Activated T-helper 2 cell treated with anti-CD3 and anti-CD28 coated beads, Interferon-gamma antibody, Interleukin-2, Interleukin-4, amounts not matched to agents 10 μg/mL and 5 μg/mL and 100 μg/mL, durations not matched to agents 14 hours and 24 hours and 36 hours (primary cell): ENCODE measurements at regions of chr9 and their contacts with region 1.

Region 1: DNA sequence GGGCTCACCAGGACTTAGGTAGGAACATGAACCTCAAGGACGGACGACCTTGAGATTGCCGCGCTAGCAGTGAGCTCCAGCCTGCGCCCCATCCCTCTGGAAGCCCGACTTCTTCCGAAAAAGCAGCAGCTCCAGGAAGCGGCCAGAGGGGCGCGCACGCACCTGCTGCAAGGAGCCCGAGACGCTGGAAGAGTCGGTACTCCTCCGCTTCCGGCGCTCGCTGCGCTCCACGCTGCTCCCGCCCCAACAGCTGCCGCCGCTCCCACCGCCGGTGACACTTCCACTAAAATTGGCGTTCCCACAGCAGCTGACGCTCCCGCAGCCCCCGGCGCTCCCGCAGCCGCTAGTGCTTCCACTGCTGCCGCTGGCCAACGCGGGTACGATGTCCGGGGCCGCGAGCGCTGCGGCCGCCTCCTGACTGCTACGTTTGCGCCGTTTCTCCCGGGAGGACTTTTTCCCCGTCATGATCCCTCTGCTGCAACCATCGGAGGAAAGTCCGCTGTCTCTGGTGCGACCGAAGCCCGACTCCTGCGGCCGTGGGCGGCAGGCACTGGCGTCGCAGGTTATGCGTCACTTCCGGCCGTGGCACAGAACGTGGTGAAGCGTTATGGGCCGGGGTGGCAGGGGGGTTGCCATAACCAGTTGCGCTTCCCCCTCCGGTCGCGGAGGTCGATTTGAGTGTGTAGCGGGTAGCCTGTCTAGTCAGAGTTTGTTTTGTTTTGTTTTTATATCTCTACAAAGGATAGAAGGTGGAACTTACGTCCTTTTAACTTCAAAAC is at the start of gene CAAP1:
- DNase-seq: peak; percentile 88
- H3K4me3 Mint-ChIP-seq: peak within 1 kb of the TSS; percentile 96
- H3K27ac Mint-ChIP-seq: peak within 1 kb of the TSS; percentile 99
- H3K4me1 Mint-ChIP-seq: peaks cover 25% of the 10 kb centered on the region
- H3K27me3 Mint-ChIP-seq: no peaks in the 10 kb centered on the region
- total RNA-seq, gene CAAP1: 19.4 and 20.7 TPM in 2 replicates

Region 2: DNA sequence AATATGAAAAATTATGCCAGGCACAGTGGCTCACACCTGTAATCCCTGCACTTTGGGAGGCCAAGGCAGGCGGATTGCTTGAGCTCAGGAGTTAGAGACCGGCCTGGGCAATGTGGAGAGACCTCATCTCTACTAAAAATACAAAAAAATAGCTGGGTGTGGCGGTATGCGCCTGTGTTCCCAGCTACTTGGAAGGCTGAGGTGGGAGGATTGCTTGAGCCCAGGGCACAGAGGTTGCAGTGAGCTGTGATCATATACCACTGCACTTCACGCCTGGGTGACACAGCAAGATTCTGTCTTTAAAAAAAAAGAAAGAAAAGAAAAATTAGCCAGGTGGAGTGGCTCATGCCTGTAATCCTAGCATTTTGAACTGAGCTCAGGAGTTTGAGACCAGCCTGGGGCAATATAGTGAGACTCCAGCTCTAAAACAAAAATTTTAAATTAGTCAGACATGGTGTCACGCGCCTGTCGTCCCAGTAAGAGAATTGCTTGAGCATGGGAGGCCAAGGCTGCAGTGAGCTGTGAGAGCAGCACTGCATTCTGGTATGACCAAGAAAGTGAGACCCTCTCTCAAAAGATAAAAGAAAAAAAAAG is 36.6 kb after region 1 on chr9:
- intact Hi-C with region 1: no loop called
- DNase-seq: no peak
- H3K4me3 Mint-ChIP-seq: no peak overlapping the region
- H3K27ac Mint-ChIP-seq: no peak overlapping the region
- H3K4me1 Mint-ChIP-seq: peaks cover 5% of the 10 kb centered on the region
- H3K27me3 Mint-ChIP-seq: no peaks in the 10 kb centered on the region

Region 3: GRCh38 chr9:26946753-26947727 is 54.6 kb after region 1 on chr9 and contains the start of gene PLAA:
- intact Hi-C with region 1: loop called (anchors 1 kb)
- DNase-seq: peak; percentile 83
- H3K4me3 Mint-ChIP-seq: peak within 1 kb of the TSS; percentile 95
- H3K27ac Mint-ChIP-seq: peak within 1 kb of the TSS; percentile 100
- H3K4me1 Mint-ChIP-seq: peaks cover 47% of the 10 kb centered on the region
- H3K27me3 Mint-ChIP-seq: no peaks in the 10 kb centered on the region
- total RNA-seq, gene PLAA: 36.4 and 42.0 TPM in 2 replicates

Region 4: DNA sequence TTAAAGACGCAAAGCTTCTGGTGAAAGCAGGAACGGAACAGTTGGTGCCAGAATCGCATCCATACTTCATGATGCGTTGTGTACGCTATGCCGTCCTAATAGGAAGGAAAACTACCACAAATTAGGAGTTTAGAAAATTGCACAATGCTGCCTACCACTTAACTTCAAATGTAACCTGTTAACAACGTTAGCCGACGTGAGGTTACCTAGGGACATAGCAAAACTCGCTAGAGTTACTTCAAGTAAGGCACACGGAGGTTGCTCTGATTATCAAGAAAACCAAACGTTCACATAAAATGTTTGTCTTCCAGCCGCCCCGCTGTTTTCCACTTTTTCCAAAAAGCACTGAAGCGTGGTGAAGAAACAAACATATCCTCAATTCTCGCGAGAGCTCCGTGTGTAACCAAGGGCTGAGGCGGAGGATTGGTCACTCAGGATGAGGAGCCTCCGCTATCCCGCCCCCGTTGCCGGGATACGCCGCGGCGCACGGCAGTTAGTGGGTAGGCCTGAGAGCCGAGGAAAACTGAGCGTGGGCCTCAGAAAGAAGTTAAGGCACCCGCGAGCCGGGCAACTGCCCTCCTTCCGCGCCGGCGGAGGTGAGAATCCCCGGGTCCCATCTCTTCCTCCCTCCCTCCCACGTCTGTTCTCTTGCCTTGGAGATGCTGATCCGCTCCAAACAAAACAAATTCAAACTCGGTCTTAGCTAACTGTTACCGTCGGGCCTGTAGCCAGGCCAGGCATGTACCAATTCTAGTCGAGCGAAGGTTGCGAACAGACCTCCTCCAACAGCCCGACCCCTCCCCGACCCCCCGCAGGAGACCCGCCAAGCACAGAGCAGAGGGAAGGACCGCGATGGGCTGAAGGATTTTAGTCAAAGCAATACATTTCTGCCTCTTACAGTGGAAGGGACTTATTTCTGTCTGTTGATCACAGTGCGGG is 63.8 kb after region 1 on chr9 and contains the start of gene IFT74:
- intact Hi-C with region 1: loop called (anchors 1 kb)
- DNase-seq: peak; percentile 92
- H3K4me3 Mint-ChIP-seq: peak within 1 kb of the TSS; percentile 86
- H3K27ac Mint-ChIP-seq: peak within 1 kb of the TSS; percentile 92
- H3K4me1 Mint-ChIP-seq: peaks cover 34% of the 10 kb centered on the region
- H3K27me3 Mint-ChIP-seq: no peaks in the 10 kb centered on the region
- total RNA-seq, gene IFT74: 8.3 and 10.4 TPM in 2 replicates